AG04449 (cell line): ENCODE measurements at regions of chr4 and their contacts with region 1.

Region 1: GRCh38 chr4:74098450-74098994 is 473 bp downstream of the CXCL2 start:
- DNase-seq: no peak
- H3K4me3 ChIP-seq: peak overlapping the region; percentile 72
- CTCF ChIP-seq: no peak

Region 2: DNA sequence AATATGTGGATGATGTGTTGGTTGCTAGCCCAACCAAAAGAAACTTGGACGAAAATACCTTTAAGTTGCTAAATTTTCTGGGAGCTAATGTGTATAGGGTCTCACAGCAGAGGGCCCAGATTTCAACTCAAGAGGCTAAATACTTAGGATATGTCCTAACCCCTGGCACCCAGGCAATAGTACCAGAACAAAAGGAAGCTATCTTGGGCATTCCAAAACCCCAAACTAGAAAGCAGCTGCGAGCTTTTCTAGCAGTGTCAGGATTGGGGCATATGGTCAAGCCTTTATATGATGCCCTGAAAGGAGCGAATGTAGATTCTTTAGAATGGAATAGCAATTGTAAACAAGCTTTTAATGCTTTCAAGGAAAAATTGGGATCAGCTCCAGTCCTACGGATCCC is 10.1 kb before region 1 on chr4:
- CTCF ChIA-PET with region 1: interaction called, 20 read pairs
- POLR2A ChIA-PET with region 1: interaction called, 5 read pairs
- DNase-seq: no peak
- H3K4me3 ChIP-seq: no peak overlapping the region
- CTCF ChIP-seq: no peak

Region 3: DNA sequence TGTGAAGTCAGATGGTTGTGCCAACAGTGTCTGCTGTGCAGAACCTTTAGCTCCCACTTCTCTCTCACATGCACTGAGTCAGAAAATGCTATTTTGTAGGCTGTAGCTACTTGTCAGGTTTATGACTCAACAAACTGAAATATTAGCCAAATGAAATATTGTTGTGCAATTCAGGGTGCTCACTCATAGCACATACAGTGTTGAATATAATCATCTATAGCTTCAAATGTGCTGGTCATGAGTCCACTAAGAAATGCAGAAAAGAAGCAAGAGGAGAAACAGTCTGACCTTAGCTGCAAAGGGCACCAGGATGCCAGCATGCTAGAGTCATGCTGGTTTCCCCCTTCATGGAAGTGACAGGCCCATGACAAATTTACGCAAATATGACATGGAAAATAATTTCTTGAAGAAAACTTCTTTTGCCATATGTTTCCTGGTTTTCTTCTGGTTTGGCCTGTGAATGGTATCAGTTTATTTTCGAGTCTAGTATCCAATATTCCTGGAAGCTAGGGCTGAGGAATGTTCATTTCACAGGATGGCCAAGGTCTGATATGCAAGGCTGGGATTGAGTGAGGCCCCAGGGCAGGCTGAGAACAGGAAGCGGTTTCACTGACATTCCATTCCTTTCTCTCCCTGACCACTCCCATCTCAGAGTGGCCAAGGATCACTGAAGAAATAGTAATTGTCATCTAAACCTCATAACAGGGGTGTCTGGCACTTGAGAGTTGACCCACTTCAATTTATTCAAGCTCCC is 10.8 kb after region 1 on chr4:
- CTCF ChIA-PET with region 1: interaction called, 46 read pairs
- POLR2A ChIA-PET with region 1: interaction called, 10 read pairs
- DNase-seq: peak; percentile 94
- H3K4me3 ChIP-seq: no peak overlapping the region
- CTCF ChIP-seq: no peak

Region 4: DNA sequence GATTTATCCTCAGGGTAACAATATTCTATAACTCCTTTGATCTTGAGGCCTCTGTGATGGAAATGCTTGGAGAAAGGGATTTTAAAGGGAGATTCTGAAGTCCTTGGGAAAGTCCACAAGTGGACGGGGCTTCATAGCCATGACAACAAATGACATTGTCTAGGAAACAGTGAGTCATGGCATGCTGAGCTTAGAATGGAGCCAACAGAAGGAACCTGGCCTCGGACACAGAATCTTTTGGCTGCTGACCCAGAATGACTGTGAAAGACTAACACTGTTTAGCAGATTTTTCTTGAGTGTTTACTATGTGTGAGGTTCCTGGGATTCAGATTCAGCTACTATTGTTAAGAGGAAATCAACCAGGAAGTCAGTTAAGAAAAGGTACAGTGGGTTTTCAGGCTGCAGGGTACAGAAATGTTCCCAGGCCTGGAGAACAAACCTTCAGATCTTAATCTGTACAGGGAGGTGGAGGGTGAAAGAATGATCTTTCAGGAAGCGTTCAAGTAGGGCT is 18.6 kb after region 1 on chr4:
- CTCF ChIA-PET with region 1: interaction called, 46 read pairs
- POLR2A ChIA-PET with region 1: no interaction called
- DNase-seq: peak; percentile 70
- H3K4me3 ChIP-seq: no peak overlapping the region
- CTCF ChIP-seq: no peak